HepG2 (cell line): ENCODE measurements at regions of chr10 and their contacts with region 1.

Region 1: DNA sequence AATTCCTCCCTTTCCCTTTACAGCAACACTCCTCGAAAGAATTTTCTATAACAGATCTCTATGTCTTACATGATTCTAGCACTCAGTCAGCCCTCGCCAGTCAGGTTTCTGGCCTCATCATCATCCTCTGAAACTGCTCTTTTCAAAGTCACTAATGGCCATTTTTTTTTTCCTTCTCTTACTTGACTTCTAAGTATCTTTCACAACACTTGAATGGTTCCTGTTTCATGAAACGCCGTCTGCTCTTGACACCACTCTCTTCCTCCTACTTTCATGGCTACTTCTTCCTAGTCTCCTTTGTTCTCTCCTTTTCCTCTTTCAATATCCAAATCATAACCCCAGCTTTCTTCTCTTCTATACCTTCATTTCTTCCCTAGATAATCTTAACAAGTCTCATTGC is 100.5 kb upstream of the NRP1 start:
- DNase-seq: no peak
- ATAC-seq: no peak
- H3K4me3 ChIP-seq: no peak overlapping the region
- H3K27ac ChIP-seq: no peak overlapping the region
- H3K4me1 ChIP-seq: no peaks in the 10 kb centered on the region
- H3K27me3 ChIP-seq: peaks cover 0 to 5% of the 10 kb centered on the region in 2 experiments; a peak in 3 of 5 replicates
- CTCF ChIP-seq: no peak
- EP300 ChIP-seq: no peak
- POLR2A ChIP-seq: no peak
- RAD21 ChIP-seq: no peak

Region 2: GRCh38 chr10:33955676-33956075 is 520.7 kb after region 1 on chr10:
- CTCF ChIA-PET with region 1: no interaction called
- POLR2A ChIA-PET with region 1: no interaction called
- in situ Hi-C with region 1: no loop called
- intact Hi-C with region 1: loop called (anchors 5 kb)
- DNase-seq: no peak
- ATAC-seq: no peak
- H3K4me3 ChIP-seq: no peak overlapping the region
- H3K27ac ChIP-seq: no peak overlapping the region
- H3K4me1 ChIP-seq: no peaks in the 10 kb centered on the region
- H3K27me3 ChIP-seq: peaks cover 0 to 3% of the 10 kb centered on the region in 2 experiments; a peak in 1 of 5 replicates
- CTCF ChIP-seq: no peak
- EP300 ChIP-seq: no peak
- POLR2A ChIP-seq: no peak
- RAD21 ChIP-seq: no peak